ENCODE measurements at regions of chr11 and their contacts with region 1.

Region 1: DNA sequence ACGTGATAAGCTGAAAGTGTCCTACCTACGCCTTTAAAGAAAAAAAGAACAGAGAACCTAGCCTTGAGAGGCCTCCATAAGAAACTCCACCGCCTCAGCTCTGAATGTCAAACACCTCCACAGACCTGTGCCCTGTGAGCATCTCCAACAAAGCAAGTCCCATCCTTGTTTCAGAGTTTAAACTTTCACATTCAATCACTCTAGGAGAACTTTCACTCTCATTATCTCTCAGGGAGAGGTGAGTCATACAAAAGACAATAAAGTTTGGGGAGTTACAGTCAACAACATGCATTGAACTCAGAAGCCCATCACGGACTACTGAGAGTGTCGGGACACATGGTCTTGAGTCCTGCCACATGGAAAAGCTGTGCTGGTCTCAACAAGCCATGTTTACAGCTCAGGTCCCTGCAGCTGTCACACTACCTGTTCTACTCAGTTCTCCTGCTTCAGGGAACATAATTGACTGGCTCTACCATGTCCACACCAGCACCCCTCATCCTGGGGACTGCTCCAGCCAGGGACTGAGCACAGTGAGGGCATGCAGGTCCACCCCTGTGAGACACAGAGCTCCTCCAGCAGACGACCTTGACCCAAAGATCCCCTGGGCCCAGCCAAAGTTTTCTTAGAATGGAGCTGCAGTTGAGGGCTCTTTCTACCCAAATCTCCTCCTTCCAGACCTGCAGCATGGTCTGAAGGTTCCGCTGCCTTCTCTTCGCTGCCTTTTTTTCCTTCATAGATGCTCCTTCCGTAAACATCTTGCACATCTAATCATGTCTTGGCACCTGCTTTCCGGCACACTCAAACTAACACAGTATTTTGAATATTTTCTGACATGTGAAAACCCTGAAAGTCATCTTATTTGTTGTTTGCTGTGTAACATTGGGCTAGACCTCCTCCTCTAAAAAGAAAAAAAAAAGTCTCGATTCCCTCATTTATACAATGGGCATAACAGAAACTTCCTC is 114.9 kb downstream of the ETS1 start:
- DNase-seq: peak in 6 of 14 experiments; percentile 41 to 79 (median 64)
- ATAC-seq: peak; percentile 19
- H3K4me3 ChIP-seq: peak overlapping the region; percentile 37
- H3K4me3 Mint-ChIP-seq: peak overlapping the region; percentile 64
- H3K27ac ChIP-seq: peak overlapping the region; percentile 92 to 94
- H3K27ac Mint-ChIP-seq: peak overlapping the region; percentile 99
- H3K4me1 ChIP-seq: peaks cover 90% of the 10 kb centered on the region
- H3K4me1 Mint-ChIP-seq: peaks cover 99% of the 10 kb centered on the region
- H3K27me3 ChIP-seq: no peaks in the 10 kb centered on the region
- H3K27me3 Mint-ChIP-seq: no peaks in the 10 kb centered on the region
- CTCF ChIP-seq: no peak

Region 2: GRCh38 chr11:128195057-128195751 is 277.2 kb before region 1 on chr11:
- CTCF ChIA-PET with region 1: no interaction called
- POLR2A ChIA-PET with region 1: no interaction called
- intact Hi-C with region 1: loop called in 1 of 2 experiments (anchors 5 kb)
- DNase-seq: peak in 13 of 14 experiments; percentile 9 to 86 (median 39)
- ATAC-seq: peak; percentile 98
- H3K4me3 ChIP-seq: no peak overlapping the region
- H3K4me3 Mint-ChIP-seq: peak overlapping the region; percentile 47
- H3K27ac ChIP-seq: peak overlapping the region in 1 of 2 donors; percentile 33
- H3K27ac Mint-ChIP-seq: peak overlapping the region; percentile 60
- H3K4me1 ChIP-seq: peaks cover 9% of the 10 kb centered on the region
- H3K4me1 Mint-ChIP-seq: peaks cover 35% of the 10 kb centered on the region
- H3K27me3 ChIP-seq: no peaks in the 10 kb centered on the region
- H3K27me3 Mint-ChIP-seq: no peaks in the 10 kb centered on the region
- CTCF ChIP-seq: peak; percentile 58

Region 3: DNA sequence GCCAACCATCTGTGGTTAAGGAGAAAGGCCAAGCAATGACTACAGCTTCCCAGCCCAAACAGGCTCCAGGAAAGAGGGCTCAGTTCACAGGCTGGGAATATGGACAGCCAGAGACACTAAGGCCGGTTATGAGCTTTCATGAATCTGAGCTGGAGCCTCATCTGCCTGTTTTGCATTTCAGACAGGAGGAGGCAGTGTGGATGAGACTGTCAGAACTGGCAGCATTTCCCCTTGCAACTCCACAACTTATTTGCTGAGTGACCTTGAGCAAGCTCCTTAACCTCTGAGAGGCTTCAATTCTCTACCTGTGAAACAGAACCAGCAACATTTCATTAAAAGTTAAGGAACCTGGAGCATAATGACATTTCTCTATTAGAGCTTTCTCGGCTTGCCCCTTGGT is 149.0 kb before region 1 on chr11:
- CTCF ChIA-PET with region 1: interaction called, 8 read pairs
- POLR2A ChIA-PET with region 1: interaction called, 98 read pairs
- intact Hi-C with region 1: loop called in 1 of 2 experiments (anchors 2 kb)
- DNase-seq: peak in 6 of 14 experiments; percentile 37 to 83 (median 66)
- ATAC-seq: peak; percentile 10
- H3K4me3 ChIP-seq: no peak overlapping the region
- H3K4me3 Mint-ChIP-seq: peak overlapping the region; percentile 47
- H3K27ac ChIP-seq: peak overlapping the region; percentile 89 to 91
- H3K27ac Mint-ChIP-seq: peak overlapping the region; percentile 93
- H3K4me1 ChIP-seq: peaks cover 85% of the 10 kb centered on the region
- H3K4me1 Mint-ChIP-seq: peaks cover 84% of the 10 kb centered on the region
- H3K27me3 ChIP-seq: no peaks in the 10 kb centered on the region
- H3K27me3 Mint-ChIP-seq: no peaks in the 10 kb centered on the region
- CTCF ChIP-seq: peak; percentile 52

Region 4: DNA sequence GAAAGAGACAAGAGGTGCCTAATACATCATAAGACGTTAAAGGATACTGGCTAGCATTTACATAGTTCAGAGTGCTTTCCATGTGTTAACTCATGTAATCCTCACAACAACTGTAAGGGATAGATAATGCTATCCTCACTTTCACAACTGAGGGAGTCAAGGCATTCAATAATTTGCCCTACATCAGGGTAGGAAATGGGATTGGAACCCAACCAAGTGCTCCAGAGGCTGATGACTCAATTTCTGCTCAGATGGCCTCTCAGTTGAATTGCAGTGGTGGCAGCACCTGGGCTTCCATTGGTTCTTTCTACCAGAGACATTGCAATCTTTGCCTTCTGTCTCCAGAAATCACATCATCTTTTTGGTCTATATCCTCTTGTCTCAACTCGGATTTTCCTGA is 117.9 kb before region 1 on chr11:
- CTCF ChIA-PET with region 1: no interaction called
- POLR2A ChIA-PET with region 1: no interaction called
- intact Hi-C with region 1: no loop called
- DNase-seq: no peak
- ATAC-seq: no peak
- H3K4me3 ChIP-seq: no peak overlapping the region
- H3K4me3 Mint-ChIP-seq: no peak overlapping the region
- H3K27ac ChIP-seq: no peak overlapping the region
- H3K27ac Mint-ChIP-seq: no peak overlapping the region
- H3K4me1 ChIP-seq: peaks cover 11% of the 10 kb centered on the region
- H3K4me1 Mint-ChIP-seq: peaks cover 69% of the 10 kb centered on the region
- H3K27me3 ChIP-seq: no peaks in the 10 kb centered on the region
- H3K27me3 Mint-ChIP-seq: no peaks in the 10 kb centered on the region
- CTCF ChIP-seq: no peak

Region 5: DNA sequence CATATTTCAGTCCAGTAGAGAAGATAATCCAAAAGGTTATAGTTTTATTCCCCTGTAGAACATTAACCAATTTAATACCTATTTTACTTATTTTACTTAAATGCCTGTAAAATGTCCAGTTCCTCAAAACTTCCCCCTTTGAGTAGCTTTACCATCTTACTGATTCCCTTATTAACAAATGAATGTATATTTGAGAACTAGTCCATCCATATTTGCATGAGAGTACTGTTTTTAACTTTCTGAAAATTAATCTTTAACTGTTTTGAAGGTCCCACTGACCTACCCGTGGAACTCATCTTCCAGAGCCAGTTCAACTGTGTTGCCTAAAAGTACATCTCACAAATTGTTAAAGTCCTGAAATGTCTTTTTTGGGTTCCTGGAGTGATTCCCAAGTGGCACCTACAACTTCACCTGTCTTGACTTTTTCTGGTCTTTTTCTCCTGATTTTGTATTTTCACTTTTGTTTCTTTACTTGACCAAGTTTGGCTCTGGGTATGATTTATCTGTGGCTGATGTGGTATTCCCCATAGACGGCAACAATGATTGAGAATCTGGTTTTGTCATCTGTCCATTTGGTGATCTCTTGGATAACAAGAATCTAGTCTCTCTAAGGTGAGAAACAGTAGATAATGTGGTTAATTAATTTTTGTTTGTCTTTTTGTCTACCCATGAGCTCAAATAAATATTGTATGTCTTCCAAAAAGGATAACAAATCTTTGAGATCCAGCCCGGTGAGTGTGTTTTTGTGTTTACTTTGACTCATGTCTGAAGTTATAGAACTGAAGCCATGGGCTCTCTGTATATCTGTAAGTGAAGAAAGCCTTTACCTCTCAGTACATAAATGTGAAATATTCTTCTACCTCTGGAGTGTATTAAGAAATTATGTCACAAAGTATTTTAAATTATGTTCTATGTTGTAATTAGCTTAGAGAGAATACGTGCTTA is 59.3 kb before region 1 on chr11:
- CTCF ChIA-PET with region 1: no interaction called
- POLR2A ChIA-PET with region 1: interaction called, 12 read pairs
- intact Hi-C with region 1: no loop called
- DNase-seq: no peak
- ATAC-seq: no peak
- H3K4me3 ChIP-seq: no peak overlapping the region
- H3K4me3 Mint-ChIP-seq: peak overlapping the region; percentile 23
- H3K27ac ChIP-seq: no peak overlapping the region
- H3K27ac Mint-ChIP-seq: peak overlapping the region; percentile 74
- H3K4me1 ChIP-seq: no peaks in the 10 kb centered on the region
- H3K4me1 Mint-ChIP-seq: peaks cover 77% of the 10 kb centered on the region
- H3K27me3 ChIP-seq: no peaks in the 10 kb centered on the region
- H3K27me3 Mint-ChIP-seq: no peaks in the 10 kb centered on the region
- CTCF ChIP-seq: no peak

Region 6: DNA sequence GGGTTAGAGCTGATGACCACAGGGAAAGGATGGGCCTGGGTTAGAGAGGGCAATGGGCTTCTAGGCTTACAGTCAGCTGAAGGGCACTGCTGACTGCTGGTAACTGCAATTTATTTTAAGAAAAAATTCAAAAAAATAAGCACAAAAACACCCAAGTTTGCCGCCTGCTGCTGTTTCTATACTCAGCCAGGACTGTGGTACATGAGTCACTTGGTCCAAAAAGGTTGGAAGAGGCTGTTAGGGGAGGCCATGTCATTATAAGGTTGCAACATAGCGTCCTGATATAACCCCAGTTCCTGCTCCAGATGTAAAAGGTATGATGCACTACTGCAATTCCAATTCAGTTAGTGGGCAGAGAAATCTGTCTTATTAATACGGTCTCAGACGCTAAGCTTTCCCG is 16.1 kb after region 1 on chr11:
- CTCF ChIA-PET with region 1: interaction called, 4 read pairs
- POLR2A ChIA-PET with region 1: interaction called, 476 read pairs
- intact Hi-C with region 1: loop called in 1 of 2 experiments (anchors 2 kb)
- DNase-seq: peak in 3 of 14 experiments; percentile 28 to 57 (median 40)
- ATAC-seq: peak; percentile 57
- H3K4me3 ChIP-seq: peak overlapping the region; percentile 13
- H3K4me3 Mint-ChIP-seq: peak overlapping the region; percentile 74
- H3K27ac ChIP-seq: peak overlapping the region; percentile 52 to 94
- H3K27ac Mint-ChIP-seq: peak overlapping the region; percentile 99
- H3K4me1 ChIP-seq: peaks cover 96% of the 10 kb centered on the region
- H3K4me1 Mint-ChIP-seq: peaks cover 98% of the 10 kb centered on the region
- H3K27me3 ChIP-seq: no peaks in the 10 kb centered on the region
- H3K27me3 Mint-ChIP-seq: no peaks in the 10 kb centered on the region
- CTCF ChIP-seq: no peak

Region 7: GRCh38 chr11:128624269-128625175 is 152.1 kb after region 1 on chr11:
- CTCF ChIA-PET with region 1: no interaction called
- POLR2A ChIA-PET with region 1: interaction called, 21 read pairs
- intact Hi-C with region 1: no loop called
- DNase-seq: peak; percentile 38 to 89 (median 68)
- ATAC-seq: peak; percentile 69
- H3K4me3 ChIP-seq: peak overlapping the region; percentile 4
- H3K4me3 Mint-ChIP-seq: peak overlapping the region; percentile 80
- H3K27ac ChIP-seq: peak overlapping the region; percentile 78
- H3K27ac Mint-ChIP-seq: peak overlapping the region; percentile 97
- H3K4me1 ChIP-seq: peaks cover 88% of the 10 kb centered on the region
- H3K4me1 Mint-ChIP-seq: peaks cover 98% of the 10 kb centered on the region
- H3K27me3 ChIP-seq: no peaks in the 10 kb centered on the region
- H3K27me3 Mint-ChIP-seq: no peaks in the 10 kb centered on the region
- CTCF ChIP-seq: no peak

Region 8: GRCh38 chr11:128725630-128726319 is 253.4 kb after region 1 on chr11:
- CTCF ChIA-PET with region 1: no interaction called
- POLR2A ChIA-PET with region 1: interaction called, 3 read pairs
- intact Hi-C with region 1: loop called in 1 of 2 experiments (anchors 10 kb)
- DNase-seq: peak in 12 of 14 experiments; percentile 27 to 92 (median 50)
- ATAC-seq: peak; percentile 61
- H3K4me3 ChIP-seq: peak overlapping the region; percentile 33
- H3K4me3 Mint-ChIP-seq: peak overlapping the region; percentile 80
- H3K27ac ChIP-seq: peak overlapping the region; percentile 4 to 63
- H3K27ac Mint-ChIP-seq: peak overlapping the region; percentile 90
- H3K4me1 ChIP-seq: peaks cover 100% of the 10 kb centered on the region
- H3K4me1 Mint-ChIP-seq: peaks cover 99% of the 10 kb centered on the region
- H3K27me3 ChIP-seq: no peaks in the 10 kb centered on the region
- H3K27me3 Mint-ChIP-seq: peaks cover 5% of the 10 kb centered on the region
- CTCF ChIP-seq: no peak